Endothelial cell of umbilical vein (primary cell): ENCODE measurements at regions of chr6 and their contacts with region 1.

Region 1: DNA sequence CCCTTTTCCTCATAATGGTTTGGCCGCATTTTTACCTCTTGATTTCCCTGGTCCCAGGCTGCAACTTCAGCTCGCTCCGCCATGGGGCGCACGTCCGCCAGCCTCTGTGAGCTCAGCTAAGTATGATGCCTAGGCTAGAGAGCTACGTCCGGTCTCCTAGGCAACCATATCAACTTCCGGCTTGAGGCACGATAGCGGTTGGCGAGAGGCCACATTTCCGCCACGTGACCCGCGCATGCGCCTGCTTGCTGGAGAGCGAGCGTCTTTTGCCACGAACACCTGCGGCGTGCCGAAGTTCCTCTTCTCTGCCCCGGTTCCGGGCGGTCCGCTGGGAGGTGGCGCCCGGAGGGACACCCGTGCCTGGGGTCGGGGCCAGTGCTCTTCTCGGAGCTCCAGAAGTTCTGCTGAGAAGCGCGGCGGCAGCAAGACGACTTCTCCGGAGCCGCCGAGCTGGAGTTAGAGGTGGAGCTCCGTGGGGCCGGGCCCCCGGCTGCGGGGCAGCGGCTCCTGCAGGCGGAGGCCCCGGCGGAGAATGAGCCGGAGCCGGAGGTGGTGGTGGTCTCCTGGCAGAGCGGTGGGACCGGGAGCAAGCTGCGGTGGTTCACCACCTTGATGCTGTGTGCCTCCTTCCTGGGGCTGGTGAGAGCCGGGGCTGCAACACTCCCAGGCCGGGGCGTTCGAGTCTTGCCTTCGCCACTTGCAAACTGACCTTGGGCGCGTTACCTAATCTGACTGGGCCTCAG is 172.0 kb downstream of the SLC16A10 start:
- DNase-seq: peak; percentile 99
- H3K4me3 ChIP-seq: peak overlapping the region; percentile 41 to 68 (median 47)
- H3K27ac ChIP-seq: peak overlapping the region; percentile 55
- H3K4me1 ChIP-seq: peaks cover 11% of the 10 kb centered on the region
- H3K27me3 ChIP-seq: peaks cover 11 to 25% of the 10 kb centered on the region in 2 experiments
- CTCF ChIP-seq: peak; percentile 89 to 98
- POLR2A ChIP-seq: peak; percentile 81

Region 2: GRCh38 chr6:110567957-110568696 is 691.1 kb before region 1 on chr6:
- CTCF ChIA-PET with region 1: no interaction called
- POLR2A ChIA-PET with region 1: no interaction called
- dilution Hi-C with region 1: no loop called
- intact Hi-C with region 1: no loop called
- DNase-seq: no peak
- H3K4me3 ChIP-seq: no peak overlapping the region
- H3K27ac ChIP-seq: no peak overlapping the region
- H3K4me1 ChIP-seq: no peaks in the 10 kb centered on the region
- H3K27me3 ChIP-seq: peaks cover 19 to 20% of the 10 kb centered on the region in 2 experiments
- CTCF ChIP-seq: no peak
- POLR2A ChIP-seq: no peak

Region 3: GRCh38 chr6:111269401-111269970 is 10.2 kb after region 1 on chr6:
- CTCF ChIA-PET with region 1: interaction called, 13 read pairs
- POLR2A ChIA-PET with region 1: no interaction called
- dilution Hi-C with region 1: no loop called
- intact Hi-C with region 1: no loop called
- DNase-seq: no peak
- H3K4me3 ChIP-seq: no peak overlapping the region
- H3K27ac ChIP-seq: no peak overlapping the region
- H3K4me1 ChIP-seq: no peaks in the 10 kb centered on the region
- H3K27me3 ChIP-seq: no peaks in the 10 kb centered on the region
- CTCF ChIP-seq: no peak
- POLR2A ChIP-seq: no peak

Region 4: DNA sequence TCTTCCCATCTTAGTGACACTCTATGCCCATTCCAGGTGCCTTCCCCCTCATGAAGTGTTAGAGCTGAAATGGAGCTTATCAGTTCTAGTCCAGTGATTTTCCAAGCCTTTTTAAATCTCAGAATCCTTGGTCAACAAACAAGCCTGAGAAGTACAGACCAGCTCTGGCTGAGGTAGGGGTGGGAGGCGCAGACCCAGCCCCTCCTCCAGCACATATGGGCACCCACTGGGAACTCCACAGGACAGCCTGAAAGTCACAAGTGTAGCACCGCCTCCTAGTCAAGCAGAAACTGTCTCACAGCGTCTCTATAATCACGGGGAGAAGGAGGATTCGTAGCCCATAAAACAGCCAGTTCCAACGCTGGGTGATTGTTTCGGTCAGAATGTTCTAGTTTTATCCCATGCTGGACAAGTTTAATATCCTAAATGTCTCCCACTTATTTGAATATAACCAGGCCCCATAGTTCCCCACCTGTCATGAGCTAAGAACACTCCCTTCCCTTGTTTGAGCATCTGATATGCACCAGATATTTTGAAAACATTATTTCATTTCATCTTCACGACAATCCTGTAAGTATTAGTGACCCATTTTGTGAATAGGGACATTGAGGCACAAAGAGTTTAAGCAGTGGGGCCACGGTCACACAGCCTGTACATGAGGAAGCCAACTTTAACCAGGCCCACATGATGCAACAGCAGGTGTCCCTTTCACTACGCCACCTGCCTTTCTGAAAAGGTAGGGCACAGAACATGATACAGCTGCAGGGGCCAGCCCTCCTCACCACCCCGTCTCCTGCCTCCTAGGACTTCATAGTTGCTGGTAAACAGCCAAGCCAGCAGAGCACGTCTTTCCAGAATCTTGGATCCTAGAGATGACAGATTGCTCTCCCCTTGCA is 306.3 kb after region 1 on chr6:
- CTCF ChIA-PET with region 1: interaction called, 3 read pairs
- POLR2A ChIA-PET with region 1: no interaction called
- dilution Hi-C with region 1: no loop called
- intact Hi-C with region 1: loop called (anchors 1 kb)
- DNase-seq: no peak
- H3K4me3 ChIP-seq: no peak overlapping the region
- H3K27ac ChIP-seq: peak overlapping the region; percentile 94
- H3K4me1 ChIP-seq: peaks cover 52% of the 10 kb centered on the region
- H3K27me3 ChIP-seq: no peaks in the 10 kb centered on the region
- CTCF ChIP-seq: no peak
- POLR2A ChIP-seq: no peak

Region 5: GRCh38 chr6:111605100-111605751 is 346.0 kb after region 1 on chr6:
- CTCF ChIA-PET with region 1: interaction called, 8 read pairs
- POLR2A ChIA-PET with region 1: no interaction called
- dilution Hi-C with region 1: no loop called
- intact Hi-C with region 1: loop called (anchors 1 kb)
- DNase-seq: peak; percentile 77
- H3K4me3 ChIP-seq: peak overlapping the region; percentile 37 to 44 (median 38)
- H3K27ac ChIP-seq: peak overlapping the region; percentile 92
- H3K4me1 ChIP-seq: peaks cover 59% of the 10 kb centered on the region
- H3K27me3 ChIP-seq: no peaks in the 10 kb centered on the region
- CTCF ChIP-seq: no peak
- POLR2A ChIP-seq: no peak

Region 6: DNA sequence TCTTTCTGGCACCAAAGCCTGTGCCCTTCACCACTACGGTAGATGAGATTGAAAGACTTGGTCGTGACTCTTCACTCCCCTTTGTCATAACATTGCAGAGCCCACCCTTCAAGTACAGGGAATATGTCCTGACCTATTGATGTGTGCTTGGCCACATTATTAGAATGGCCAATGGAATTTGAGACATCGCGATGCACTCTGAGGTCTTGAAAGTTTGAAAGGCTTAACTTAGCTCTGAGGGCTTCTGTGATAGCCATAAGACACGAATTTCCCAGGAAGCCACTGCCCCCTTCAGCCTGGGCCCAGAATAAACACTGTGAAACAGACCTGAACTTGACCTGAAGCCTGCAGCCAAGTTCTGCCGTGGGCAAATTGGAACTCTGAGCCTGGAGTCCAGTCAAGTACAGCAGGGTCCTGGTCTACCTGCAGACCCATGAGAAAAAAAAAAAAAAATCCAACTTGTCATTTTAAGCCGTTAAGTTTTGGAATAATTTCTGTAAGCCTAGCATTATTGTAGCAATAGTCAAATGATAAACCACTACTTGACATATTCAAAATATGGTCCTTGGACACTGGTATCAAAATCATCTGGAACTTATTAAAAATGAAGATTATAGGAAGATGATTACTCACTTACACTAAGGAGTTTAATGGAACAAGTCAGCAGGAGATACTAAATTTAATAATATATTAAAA is 383.4 kb after region 1 on chr6:
- CTCF ChIA-PET with region 1: interaction called, 23 read pairs
- POLR2A ChIA-PET with region 1: no interaction called
- dilution Hi-C with region 1: no loop called
- intact Hi-C with region 1: loop called (anchors 1 kb)
- DNase-seq: peak; percentile 79
- H3K4me3 ChIP-seq: no peak overlapping the region
- H3K27ac ChIP-seq: no peak overlapping the region
- H3K4me1 ChIP-seq: no peaks in the 10 kb centered on the region
- H3K27me3 ChIP-seq: no peaks in the 10 kb centered on the region
- CTCF ChIP-seq: peak; percentile 63 to 67
- POLR2A ChIP-seq: no peak

Region 7: DNA sequence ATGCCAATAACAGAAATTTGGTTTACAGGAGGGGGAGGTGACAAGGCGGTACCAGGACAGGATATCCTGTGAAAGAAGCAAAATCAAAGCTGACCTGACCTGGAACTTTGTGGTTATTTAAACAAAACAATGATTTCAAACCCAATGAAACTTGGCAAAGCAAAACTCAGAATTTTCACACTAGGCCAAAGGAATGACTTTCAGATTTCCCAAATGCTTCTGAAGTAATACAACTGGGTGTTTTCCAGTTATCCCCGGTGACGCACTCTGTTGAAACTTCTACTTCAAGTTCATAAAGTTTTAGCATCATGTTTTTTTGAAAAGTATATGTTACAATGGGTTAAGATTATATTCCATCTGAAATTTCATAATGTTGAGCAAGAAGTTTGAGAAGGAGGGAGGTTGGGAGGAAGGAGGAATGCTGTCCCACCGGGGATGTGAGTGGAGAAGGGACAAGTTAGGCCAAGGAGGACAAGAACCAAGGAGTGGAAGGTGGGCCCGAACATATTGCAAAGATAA is 424.5 kb after region 1 on chr6:
- CTCF ChIA-PET with region 1: interaction called, 7 read pairs
- POLR2A ChIA-PET with region 1: no interaction called
- dilution Hi-C with region 1: no loop called
- intact Hi-C with region 1: loop called (anchors 1 kb)
- DNase-seq: peak; percentile 91
- H3K4me3 ChIP-seq: peak overlapping the region in 1 of 3 experiments; percentile 1
- H3K27ac ChIP-seq: peak overlapping the region; percentile 82
- H3K4me1 ChIP-seq: peaks cover 51% of the 10 kb centered on the region
- H3K27me3 ChIP-seq: no peaks in the 10 kb centered on the region
- CTCF ChIP-seq: no peak
- POLR2A ChIP-seq: no peak